ENCODE measurements at regions of chr3 and their contacts with region 1.

Region 1: GRCh38 chr3:50611464-50612233 is at the start of gene CISH:
- DNase-seq: peak; percentile 92
- ATAC-seq: peak; percentile 76
- H3K4me3 ChIP-seq: peak within 1 kb of the TSS; percentile 30 to 86 (median 76)
- H3K4me3 Mint-ChIP-seq: peak within 1 kb of the TSS; percentile 90
- H3K27ac ChIP-seq: peak within 1 kb of the TSS; percentile 11 to 65
- H3K27ac Mint-ChIP-seq: peak within 1 kb of the TSS; percentile 80
- H3K4me1 ChIP-seq: peaks cover 24 to 37% of the 10 kb centered on the region in 2 donors
- H3K4me1 Mint-ChIP-seq: peaks cover 42% of the 10 kb centered on the region
- H3K27me3 ChIP-seq: no peaks in the 10 kb centered on the region
- H3K27me3 Mint-ChIP-seq: no peaks in the 10 kb centered on the region
- CTCF ChIP-seq: peak; percentile 61
- total RNA-seq, gene CISH: 2.3 and 2.4 TPM in 2 replicates

Region 2: GRCh38 chr3:50519471-50520089 is 92.1 kb before region 1 on chr3:
- CTCF ChIA-PET with region 1: interaction called, 13 read pairs
- POLR2A ChIA-PET with region 1: no interaction called
- intact Hi-C with region 1: no loop called
- DNase-seq: peak; percentile 74
- ATAC-seq: peak; percentile 58
- H3K4me3 ChIP-seq: no peak overlapping the region
- H3K4me3 Mint-ChIP-seq: no peak overlapping the region
- H3K27ac ChIP-seq: no peak overlapping the region
- H3K27ac Mint-ChIP-seq: peak overlapping the region; percentile 33
- H3K4me1 ChIP-seq: peaks cover 26 to 34% of the 10 kb centered on the region in 2 donors
- H3K4me1 Mint-ChIP-seq: peaks cover 32% of the 10 kb centered on the region
- H3K27me3 ChIP-seq: peaks cover 0 to 4% (median 0%) of the 10 kb centered on the region in 4 experiments
- H3K27me3 Mint-ChIP-seq: peaks cover 5% of the 10 kb centered on the region
- CTCF ChIP-seq: peak; percentile 89

Region 3: GRCh38 chr3:50587806-50588758 is 23.6 kb before region 1 on chr3:
- CTCF ChIA-PET with region 1: interaction called, 204 read pairs
- POLR2A ChIA-PET with region 1: interaction called, 21 read pairs
- intact Hi-C with region 1: loop called (anchors 1 kb)
- DNase-seq: no peak
- ATAC-seq: no peak
- H3K4me3 ChIP-seq: no peak overlapping the region
- H3K4me3 Mint-ChIP-seq: no peak overlapping the region
- H3K27ac ChIP-seq: no peak overlapping the region
- H3K27ac Mint-ChIP-seq: peak overlapping the region; percentile 67
- H3K4me1 ChIP-seq: peaks cover 18 to 43% of the 10 kb centered on the region in 2 donors
- H3K4me1 Mint-ChIP-seq: peaks cover 29% of the 10 kb centered on the region
- H3K27me3 ChIP-seq: no peaks in the 10 kb centered on the region
- H3K27me3 Mint-ChIP-seq: no peaks in the 10 kb centered on the region
- CTCF ChIP-seq: no peak

Region 4: DNA sequence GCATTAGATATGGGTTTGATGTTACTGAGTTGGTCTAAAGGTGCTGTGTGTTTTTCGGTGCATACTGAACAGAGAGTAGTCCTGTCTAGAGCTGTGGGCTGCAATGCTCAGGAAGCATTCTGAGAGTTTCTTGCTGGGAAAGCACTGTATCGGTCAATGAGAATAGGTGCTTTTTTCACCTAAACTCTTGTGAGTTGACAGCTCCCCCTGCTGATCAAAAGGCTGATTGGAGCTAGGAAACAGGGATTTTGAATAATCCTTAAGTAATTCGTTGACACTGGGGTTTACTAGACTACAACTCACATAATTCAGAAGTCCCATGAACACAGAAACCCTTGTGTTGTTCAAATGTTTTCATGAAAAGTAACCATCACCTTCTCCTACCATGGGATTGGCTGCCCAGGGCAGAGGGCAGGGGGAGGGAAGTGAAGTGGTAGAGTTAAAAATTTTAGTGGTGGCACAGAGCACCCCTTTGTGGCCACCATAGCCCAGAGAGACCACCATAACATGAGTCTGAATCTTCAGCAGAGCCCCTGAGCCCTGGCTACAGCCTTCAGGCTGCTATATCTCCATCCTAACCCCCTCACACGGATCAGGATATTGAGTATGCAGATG is 760.4 kb after region 1 on chr3:
- CTCF ChIA-PET with region 1: interaction called, 63 read pairs
- POLR2A ChIA-PET with region 1: no interaction called
- intact Hi-C with region 1: loop called (anchors 1 kb)
- DNase-seq: peak; percentile 62
- ATAC-seq: no peak
- H3K4me3 ChIP-seq: no peak overlapping the region
- H3K4me3 Mint-ChIP-seq: no peak overlapping the region
- H3K27ac ChIP-seq: no peak overlapping the region
- H3K27ac Mint-ChIP-seq: no peak overlapping the region
- H3K4me1 ChIP-seq: no peaks in the 10 kb centered on the region
- H3K4me1 Mint-ChIP-seq: no peaks in the 10 kb centered on the region
- H3K27me3 ChIP-seq: peaks cover 0 to 9% (median 0%) of the 10 kb centered on the region in 4 experiments
- H3K27me3 Mint-ChIP-seq: peaks cover 49% of the 10 kb centered on the region
- CTCF ChIP-seq: peak; percentile 67

Region 5: DNA sequence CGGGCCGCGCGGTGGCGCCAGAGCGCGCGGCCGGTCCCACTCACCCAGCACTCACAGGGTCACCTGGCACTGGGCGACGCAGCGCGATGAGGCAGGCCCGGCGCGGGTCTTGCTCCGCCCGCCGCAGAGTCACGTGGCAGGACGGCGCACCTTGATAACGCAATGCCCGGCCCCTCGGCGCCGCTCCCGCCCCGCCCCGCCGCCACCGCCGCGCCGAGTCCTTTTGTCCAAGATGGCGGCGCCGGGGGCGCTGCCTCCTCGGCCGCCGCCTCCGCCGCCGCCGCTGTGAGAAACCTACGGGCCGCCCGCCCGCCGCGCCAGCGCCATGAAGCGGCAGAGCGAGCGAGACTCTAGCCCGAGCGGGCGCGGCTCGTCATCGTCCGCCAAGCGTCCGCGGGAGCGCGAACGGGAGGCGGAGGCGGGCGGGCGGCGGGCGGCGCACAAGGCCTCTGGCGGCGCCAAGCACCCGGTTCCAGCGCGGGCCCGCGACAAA is 779.5 kb after region 1 on chr3 and contains the start of gene RBM15B:
- CTCF ChIA-PET with region 1: interaction called, 67 read pairs
- POLR2A ChIA-PET with region 1: interaction called, 3 read pairs
- intact Hi-C with region 1: loop called (anchors 1 kb)
- DNase-seq: peak; percentile 97
- ATAC-seq: peak; percentile 95
- H3K4me3 ChIP-seq: peak within 1 kb of the TSS; percentile 11 to 66 (median 58)
- H3K4me3 Mint-ChIP-seq: peak within 1 kb of the TSS; percentile 84
- H3K27ac ChIP-seq: peak within 1 kb of the TSS; percentile 71 to 78
- H3K27ac Mint-ChIP-seq: peak within 1 kb of the TSS; percentile 88
- H3K4me1 ChIP-seq: peaks cover 24 to 41% of the 10 kb centered on the region in 2 donors
- H3K4me1 Mint-ChIP-seq: peaks cover 54% of the 10 kb centered on the region
- H3K27me3 ChIP-seq: no peaks in the 10 kb centered on the region
- H3K27me3 Mint-ChIP-seq: no peaks in the 10 kb centered on the region
- CTCF ChIP-seq: peak; percentile 87
- total RNA-seq, gene RBM15B: 29.5 and 30.5 TPM in 2 replicates

Region 6: GRCh38 chr3:51682079-51682478 is 1070.4 kb after region 1 on chr3:
- CTCF ChIA-PET with region 1: no interaction called
- POLR2A ChIA-PET with region 1: no interaction called
- intact Hi-C with region 1: loop called (anchors 1 kb)
- DNase-seq: peak; percentile 89
- ATAC-seq: peak; percentile 83
- H3K4me3 ChIP-seq: no peak overlapping the region
- H3K4me3 Mint-ChIP-seq: peak overlapping the region; percentile 5
- H3K27ac ChIP-seq: peak overlapping the region; percentile 33 to 69
- H3K27ac Mint-ChIP-seq: peak overlapping the region; percentile 54
- H3K4me1 ChIP-seq: peaks cover 63 to 87% of the 10 kb centered on the region in 2 donors
- H3K4me1 Mint-ChIP-seq: peaks cover 78% of the 10 kb centered on the region
- H3K27me3 ChIP-seq: no peaks in the 10 kb centered on the region
- H3K27me3 Mint-ChIP-seq: no peaks in the 10 kb centered on the region
- CTCF ChIP-seq: peak; percentile 90